ENCODE measurements at regions of chr7 and their contacts with region 1.

Region 1: DNA sequence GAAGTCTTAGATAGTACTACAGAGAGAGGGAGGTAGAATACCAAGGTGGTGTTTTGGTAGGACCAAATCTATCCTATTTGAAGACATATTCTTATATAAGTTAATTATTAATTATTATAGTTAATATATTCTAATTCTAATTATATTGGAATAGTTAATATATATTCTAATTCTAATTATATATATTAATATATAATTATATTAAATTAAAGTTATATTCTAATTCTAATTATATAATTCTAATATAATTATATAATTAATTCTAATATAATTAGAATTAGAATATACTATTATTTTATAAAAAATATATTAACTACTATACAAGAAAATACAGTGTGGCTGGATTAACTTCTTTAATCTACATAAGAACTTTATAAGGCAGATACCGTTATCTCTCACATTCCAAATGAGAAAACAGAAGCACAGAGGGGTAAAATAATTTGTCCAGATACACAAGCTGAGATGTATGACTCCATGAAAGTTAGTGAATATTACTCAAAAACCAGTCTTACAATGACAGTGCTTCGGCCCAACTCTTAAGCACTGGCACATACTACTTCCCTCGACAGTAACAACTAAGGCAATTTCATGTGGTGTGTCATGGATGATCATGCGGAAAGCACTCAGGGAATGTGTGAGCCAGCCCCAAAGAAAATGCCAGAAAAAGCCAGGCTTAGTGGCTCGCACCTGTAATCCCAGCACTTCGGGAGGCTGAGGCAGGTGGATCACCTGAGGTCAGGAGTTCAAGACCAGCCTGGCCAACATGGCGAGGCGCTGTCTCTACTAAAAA is 42.6 kb downstream of the TYW1B start:
- DNase-seq: no peak
- ATAC-seq: no peak
- H3K4me3 ChIP-seq: no peak overlapping the region
- H3K4me3 Mint-ChIP-seq: no peak overlapping the region
- H3K27ac ChIP-seq: no peak overlapping the region
- H3K27ac Mint-ChIP-seq: no peak overlapping the region
- H3K4me1 ChIP-seq: no peaks in the 10 kb centered on the region
- H3K4me1 Mint-ChIP-seq: no peaks in the 10 kb centered on the region
- H3K27me3 ChIP-seq: no peaks in the 10 kb centered on the region
- H3K27me3 Mint-ChIP-seq: no peaks in the 10 kb centered on the region

Region 2: GRCh38 chr7:71896535-71896934 is 888.8 kb before region 1 on chr7:
- CTCF ChIA-PET with region 1: no interaction called
- POLR2A ChIA-PET with region 1: no interaction called
- DNase-seq: no peak
- ATAC-seq: no peak
- H3K4me3 ChIP-seq: no peak overlapping the region
- H3K4me3 Mint-ChIP-seq: no peak overlapping the region
- H3K27ac ChIP-seq: no peak overlapping the region
- H3K27ac Mint-ChIP-seq: no peak overlapping the region
- H3K4me1 ChIP-seq: no peaks in the 10 kb centered on the region
- H3K4me1 Mint-ChIP-seq: no peaks in the 10 kb centered on the region
- H3K27me3 ChIP-seq: no peaks in the 10 kb centered on the region
- H3K27me3 Mint-ChIP-seq: no peaks in the 10 kb centered on the region

Region 3: DNA sequence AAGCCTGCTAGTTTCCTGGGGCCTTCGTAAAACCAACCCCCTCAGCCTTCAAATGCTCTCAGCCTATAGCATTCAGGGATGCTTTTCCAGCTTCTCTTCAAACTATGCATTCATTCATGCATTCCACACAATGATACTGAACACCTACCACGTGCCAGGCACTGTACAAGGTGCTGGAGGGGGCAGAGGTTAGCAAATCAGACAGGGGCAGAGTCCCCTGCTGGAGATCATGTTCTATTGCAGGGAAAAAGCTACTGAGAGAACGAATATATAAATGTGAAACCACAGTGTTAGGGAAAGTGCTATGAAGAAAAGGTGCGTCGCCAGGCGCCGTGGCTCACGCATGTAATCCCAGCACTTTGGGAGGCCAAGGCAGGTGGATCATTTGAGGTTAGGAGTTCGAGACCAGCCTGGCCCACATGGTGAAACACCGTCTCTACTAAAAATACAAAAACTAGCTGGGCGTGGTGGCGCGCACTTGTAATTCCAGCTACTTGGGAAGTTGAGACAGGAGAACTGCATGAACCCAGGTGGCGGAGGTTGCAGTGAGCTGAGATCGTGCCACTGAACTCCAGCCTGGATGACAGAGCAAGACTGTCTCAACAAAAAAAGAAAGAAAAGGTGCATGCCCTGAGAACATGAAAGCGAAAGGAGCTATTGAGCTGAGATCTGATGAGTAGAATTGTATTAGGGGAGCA is 308.6 kb before region 1 on chr7:
- CTCF ChIA-PET with region 1: no interaction called
- POLR2A ChIA-PET with region 1: no interaction called
- DNase-seq: no peak
- ATAC-seq: no peak
- H3K4me3 ChIP-seq: no peak overlapping the region
- H3K4me3 Mint-ChIP-seq: no peak overlapping the region
- H3K27ac ChIP-seq: no peak overlapping the region
- H3K27ac Mint-ChIP-seq: no peak overlapping the region
- H3K4me1 ChIP-seq: no peaks in the 10 kb centered on the region
- H3K4me1 Mint-ChIP-seq: no peaks in the 10 kb centered on the region
- H3K27me3 ChIP-seq: peaks cover 0 to 4% of the 10 kb centered on the region in 2 experiments
- H3K27me3 Mint-ChIP-seq: no peaks in the 10 kb centered on the region

Region 4: GRCh38 chr7:72504061-72504706 is 281.2 kb before region 1 on chr7:
- CTCF ChIA-PET with region 1: no interaction called
- POLR2A ChIA-PET with region 1: no interaction called
- DNase-seq: no peak
- ATAC-seq: no peak
- H3K4me3 ChIP-seq: no peak overlapping the region
- H3K4me3 Mint-ChIP-seq: no peak overlapping the region
- H3K27ac ChIP-seq: no peak overlapping the region
- H3K27ac Mint-ChIP-seq: no peak overlapping the region
- H3K4me1 ChIP-seq: no peaks in the 10 kb centered on the region
- H3K4me1 Mint-ChIP-seq: no peaks in the 10 kb centered on the region
- H3K27me3 ChIP-seq: peaks cover 0 to 7% of the 10 kb centered on the region in 2 experiments
- H3K27me3 Mint-ChIP-seq: peaks cover 0 to 7% of the 10 kb centered on the region in 2 donors

Region 5: GRCh38 chr7:72751378-72751777 is 34.0 kb before region 1 on chr7:
- CTCF ChIA-PET with region 1: no interaction called
- POLR2A ChIA-PET with region 1: no interaction called
- DNase-seq: no peak
- ATAC-seq: no peak
- H3K4me3 ChIP-seq: no peak overlapping the region
- H3K4me3 Mint-ChIP-seq: no peak overlapping the region
- H3K27ac ChIP-seq: no peak overlapping the region
- H3K27ac Mint-ChIP-seq: no peak overlapping the region
- H3K4me1 ChIP-seq: no peaks in the 10 kb centered on the region
- H3K4me1 Mint-ChIP-seq: no peaks in the 10 kb centered on the region
- H3K27me3 ChIP-seq: no peaks in the 10 kb centered on the region
- H3K27me3 Mint-ChIP-seq: no peaks in the 10 kb centered on the region

Region 6: GRCh38 chr7:72805526-72806494 is 20.4 kb after region 1 on chr7:
- CTCF ChIA-PET with region 1: interaction called in 1 of 2 experiments, 10 read pairs
- POLR2A ChIA-PET with region 1: no interaction called
- DNase-seq: no peak
- ATAC-seq: no peak
- H3K4me3 ChIP-seq: no peak overlapping the region
- H3K4me3 Mint-ChIP-seq: no peak overlapping the region
- H3K27ac ChIP-seq: no peak overlapping the region
- H3K27ac Mint-ChIP-seq: no peak overlapping the region
- H3K4me1 ChIP-seq: no peaks in the 10 kb centered on the region
- H3K4me1 Mint-ChIP-seq: no peaks in the 10 kb centered on the region
- H3K27me3 ChIP-seq: no peaks in the 10 kb centered on the region
- H3K27me3 Mint-ChIP-seq: no peaks in the 10 kb centered on the region